MCF 10A (cell line): ENCODE measurements at regions of chr3 and their contacts with region 1.

Region 1: GRCh38 chr3:158727206-158728060 is 4.8 kb downstream of the RARRES1 start:
- DNase-seq: peak; percentile 72
- H3K4me3 Mint-ChIP-seq: peak overlapping the region; percentile 38
- H3K27ac Mint-ChIP-seq: no peak overlapping the region
- H3K4me1 Mint-ChIP-seq: peaks cover 11% of the 10 kb centered on the region
- H3K27me3 Mint-ChIP-seq: no peaks in the 10 kb centered on the region
- CTCF ChIP-seq: peak; percentile 47

Region 2: DNA sequence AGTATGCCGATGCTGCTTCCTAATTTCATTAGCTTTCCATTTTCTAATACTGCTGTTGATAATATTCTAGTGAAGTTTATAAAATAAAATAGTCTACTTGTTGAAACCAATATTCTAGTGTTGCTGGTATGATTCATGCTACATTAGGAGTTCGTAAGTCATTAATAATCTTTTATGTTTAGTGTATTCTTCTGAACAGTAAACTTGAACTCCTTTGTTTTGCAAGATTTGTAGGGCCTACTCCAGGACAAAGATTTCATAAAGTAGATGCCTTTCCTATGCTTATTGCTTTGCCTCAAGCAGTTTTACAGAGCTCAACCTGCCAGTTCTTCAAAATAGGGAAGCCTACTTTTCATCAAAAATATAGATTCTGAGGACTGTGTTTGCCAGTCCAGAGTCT is 506.0 kb before region 1 on chr3:
- CTCF ChIA-PET with region 1: no interaction called
- POLR2A ChIA-PET with region 1: no interaction called
- intact Hi-C with region 1: no loop called
- DNase-seq: no peak
- H3K4me3 Mint-ChIP-seq: no peak overlapping the region
- H3K27ac Mint-ChIP-seq: no peak overlapping the region
- H3K4me1 Mint-ChIP-seq: no peaks in the 10 kb centered on the region
- H3K27me3 Mint-ChIP-seq: no peaks in the 10 kb centered on the region
- CTCF ChIP-seq: no peak

Region 3: GRCh38 chr3:158659454-158660237 is 67.8 kb before region 1 on chr3:
- CTCF ChIA-PET with region 1: interaction called, 21 read pairs
- POLR2A ChIA-PET with region 1: no interaction called
- intact Hi-C with region 1: loop called (anchors 5 kb)
- DNase-seq: peak; percentile 74
- H3K4me3 Mint-ChIP-seq: no peak overlapping the region
- H3K27ac Mint-ChIP-seq: no peak overlapping the region
- H3K4me1 Mint-ChIP-seq: no peaks in the 10 kb centered on the region
- H3K27me3 Mint-ChIP-seq: no peaks in the 10 kb centered on the region
- CTCF ChIP-seq: peak; percentile 69

Region 4: DNA sequence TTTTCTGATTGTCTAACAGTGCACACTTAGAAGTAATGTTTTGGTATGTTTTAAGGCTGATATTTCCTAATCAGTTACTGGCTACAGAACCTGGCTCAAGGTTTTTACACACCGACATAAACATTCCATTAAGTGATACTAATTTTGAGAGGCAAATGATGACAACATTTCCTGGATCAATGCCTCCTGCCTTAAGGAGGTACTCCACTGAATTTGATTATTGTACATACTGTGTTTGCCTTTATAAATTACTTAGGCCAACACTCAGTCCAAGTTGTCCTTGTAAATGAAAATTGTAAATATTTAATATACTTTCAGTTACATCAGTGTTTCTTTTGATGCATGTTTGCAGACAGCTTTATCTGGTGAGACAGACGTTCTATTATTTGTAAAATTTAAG is 30.8 kb before region 1 on chr3:
- CTCF ChIA-PET with region 1: interaction called, 12 read pairs
- POLR2A ChIA-PET with region 1: no interaction called
- intact Hi-C with region 1: no loop called
- DNase-seq: no peak
- H3K4me3 Mint-ChIP-seq: no peak overlapping the region
- H3K27ac Mint-ChIP-seq: no peak overlapping the region
- H3K4me1 Mint-ChIP-seq: no peaks in the 10 kb centered on the region
- H3K27me3 Mint-ChIP-seq: no peaks in the 10 kb centered on the region
- CTCF ChIP-seq: no peak

Region 5: GRCh38 chr3:158713094-158713499 is 14.3 kb before region 1 on chr3:
- CTCF ChIA-PET with region 1: interaction called, 79 read pairs
- POLR2A ChIA-PET with region 1: interaction called, 4 read pairs
- intact Hi-C with region 1: no loop called
- DNase-seq: no peak
- H3K4me3 Mint-ChIP-seq: no peak overlapping the region
- H3K27ac Mint-ChIP-seq: no peak overlapping the region
- H3K4me1 Mint-ChIP-seq: peaks cover 31% of the 10 kb centered on the region
- H3K27me3 Mint-ChIP-seq: no peaks in the 10 kb centered on the region
- CTCF ChIP-seq: no peak

Region 6: GRCh38 chr3:158753854-158754253 is 26.4 kb after region 1 on chr3:
- CTCF ChIA-PET with region 1: interaction called, 31 read pairs
- POLR2A ChIA-PET with region 1: no interaction called
- intact Hi-C with region 1: no loop called
- DNase-seq: no peak
- H3K4me3 Mint-ChIP-seq: no peak overlapping the region
- H3K27ac Mint-ChIP-seq: no peak overlapping the region
- H3K4me1 Mint-ChIP-seq: no peaks in the 10 kb centered on the region
- H3K27me3 Mint-ChIP-seq: no peaks in the 10 kb centered on the region
- CTCF ChIP-seq: no peak

Region 7: GRCh38 chr3:158768361-158768787 is 40.9 kb after region 1 on chr3:
- CTCF ChIA-PET with region 1: interaction called, 17 read pairs
- POLR2A ChIA-PET with region 1: interaction called, 3 read pairs
- intact Hi-C with region 1: no loop called
- DNase-seq: peak; percentile 50
- H3K4me3 Mint-ChIP-seq: no peak overlapping the region
- H3K27ac Mint-ChIP-seq: no peak overlapping the region
- H3K4me1 Mint-ChIP-seq: peaks cover 25% of the 10 kb centered on the region
- H3K27me3 Mint-ChIP-seq: no peaks in the 10 kb centered on the region
- CTCF ChIP-seq: no peak

Region 8: GRCh38 chr3:158801696-158802408 is 74.4 kb after region 1 on chr3 and contains the start of gene MFSD1:
- CTCF ChIA-PET with region 1: interaction called, 26 read pairs
- POLR2A ChIA-PET with region 1: interaction called, 9 read pairs
- intact Hi-C with region 1: no loop called
- DNase-seq: peak; percentile 88
- H3K4me3 Mint-ChIP-seq: peak within 1 kb of the TSS; percentile 81
- H3K27ac Mint-ChIP-seq: peak within 1 kb of the TSS; percentile 86
- H3K4me1 Mint-ChIP-seq: peaks cover 23% of the 10 kb centered on the region
- H3K27me3 Mint-ChIP-seq: no peaks in the 10 kb centered on the region
- CTCF ChIP-seq: no peak
- total RNA-seq, gene MFSD1: 28.9 and 34.7 TPM in 2 replicates